WTC11 (cell line): ENCODE measurements at regions of chr2 and their contacts with region 1.

Region 1: GRCh38 chr2:219744600-219744999 is 117.2 kb downstream of the SLC4A3 start:
- DNase-seq: no peak
- ATAC-seq: no peak
- H3K4me3 Mint-ChIP-seq: no peak overlapping the region
- H3K27ac Mint-ChIP-seq: no peak overlapping the region
- H3K4me1 Mint-ChIP-seq: peaks cover 2% of the 10 kb centered on the region
- H3K27me3 Mint-ChIP-seq: no peaks in the 10 kb centered on the region
- CTCF ChIP-seq: no peak

Region 2: GRCh38 chr2:219851801-219852481 is 107.3 kb after region 1 on chr2:
- CTCF ChIA-PET with region 1: interaction called, 10 read pairs
- POLR2A ChIA-PET with region 1: no interaction called
- DNase-seq: peak; percentile 22
- ATAC-seq: peak; percentile 5
- H3K4me3 Mint-ChIP-seq: peak overlapping the region; percentile 11; the same call in 1 of the 2 replicates
- H3K27ac Mint-ChIP-seq: no peak overlapping the region
- H3K4me1 Mint-ChIP-seq: peaks cover 18% of the 10 kb centered on the region
- H3K27me3 Mint-ChIP-seq: peaks cover 47% of the 10 kb centered on the region
- CTCF ChIP-seq: no peak

Region 3: DNA sequence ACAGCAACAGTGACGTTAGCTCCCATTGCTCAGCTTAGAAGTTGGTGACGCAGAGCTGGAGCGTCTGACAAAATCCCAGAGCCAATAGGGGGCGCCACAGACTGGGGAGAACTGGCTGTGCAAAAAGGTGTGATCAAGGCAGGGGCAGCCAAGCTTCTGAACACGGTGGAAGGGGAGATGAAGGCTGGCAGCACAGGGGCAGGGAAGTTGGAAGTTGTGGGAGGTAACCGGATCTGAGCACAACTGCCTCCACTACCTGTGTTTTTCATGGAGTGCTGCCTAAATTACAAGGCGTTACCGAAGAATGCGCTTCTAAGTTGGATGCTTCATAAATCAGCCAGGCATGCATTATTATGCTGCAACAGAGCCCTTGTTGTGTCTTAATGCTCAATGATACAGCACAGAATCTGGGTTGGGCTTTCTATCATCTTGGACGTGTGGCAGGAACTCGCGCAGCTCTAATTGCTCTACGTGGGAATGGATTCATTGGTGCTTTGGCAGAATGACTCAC is 252.8 kb after region 1 on chr2:
- CTCF ChIA-PET with region 1: interaction called, 16 read pairs
- POLR2A ChIA-PET with region 1: no interaction called
- DNase-seq: peak; percentile 85
- ATAC-seq: peak; percentile 86
- H3K4me3 Mint-ChIP-seq: no peak overlapping the region
- H3K27ac Mint-ChIP-seq: no peak overlapping the region
- H3K4me1 Mint-ChIP-seq: peaks cover 15% of the 10 kb centered on the region
- H3K27me3 Mint-ChIP-seq: no peaks in the 10 kb centered on the region; the same call in 1 of the 2 replicates
- CTCF ChIP-seq: peak; percentile 56; the same call in 1 of the 2 replicates

Region 4: DNA sequence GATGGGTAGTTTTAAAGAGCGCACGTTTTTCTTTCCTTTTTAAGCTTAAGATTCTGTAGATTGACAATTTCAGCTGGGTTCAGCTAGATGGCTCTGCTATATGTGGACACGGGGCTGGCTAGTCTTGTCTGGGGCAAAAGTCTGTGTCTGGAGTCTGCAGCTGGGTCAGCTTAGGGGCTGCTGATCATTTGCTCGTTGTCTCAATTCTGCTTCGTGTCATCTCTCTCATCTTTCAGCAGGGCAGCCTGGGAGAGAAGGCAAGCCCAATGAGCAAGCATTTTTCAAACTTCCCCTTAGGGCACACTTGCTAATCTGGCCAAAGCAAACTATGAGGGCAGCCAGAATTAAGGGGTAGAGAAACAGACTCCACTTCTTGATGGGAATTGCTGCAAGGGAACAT is 345.4 kb after region 1 on chr2:
- CTCF ChIA-PET with region 1: no interaction called
- POLR2A ChIA-PET with region 1: no interaction called
- DNase-seq: no peak
- ATAC-seq: no peak
- H3K4me3 Mint-ChIP-seq: no peak overlapping the region
- H3K27ac Mint-ChIP-seq: no peak overlapping the region
- H3K4me1 Mint-ChIP-seq: peaks cover 5% of the 10 kb centered on the region
- H3K27me3 Mint-ChIP-seq: peaks cover 2% of the 10 kb centered on the region; the same call in 1 of the 2 replicates
- CTCF ChIP-seq: no peak